HepG2 (cell line): ENCODE measurements at regions of chr2 and their contacts with region 1.

Region 1: GRCh38 chr2:200650195-200650594 is 64.4 kb downstream of the AOX1 start:
- DNase-seq: no peak
- ATAC-seq: no peak
- H3K4me3 ChIP-seq: no peak overlapping the region
- H3K27ac ChIP-seq: no peak overlapping the region
- H3K4me1 ChIP-seq: peaks cover 30% of the 10 kb centered on the region
- H3K27me3 ChIP-seq: no peaks in the 10 kb centered on the region
- CTCF ChIP-seq: no peak
- EP300 ChIP-seq: no peak
- POLR2A ChIP-seq: no peak
- RAD21 ChIP-seq: no peak

Region 2: DNA sequence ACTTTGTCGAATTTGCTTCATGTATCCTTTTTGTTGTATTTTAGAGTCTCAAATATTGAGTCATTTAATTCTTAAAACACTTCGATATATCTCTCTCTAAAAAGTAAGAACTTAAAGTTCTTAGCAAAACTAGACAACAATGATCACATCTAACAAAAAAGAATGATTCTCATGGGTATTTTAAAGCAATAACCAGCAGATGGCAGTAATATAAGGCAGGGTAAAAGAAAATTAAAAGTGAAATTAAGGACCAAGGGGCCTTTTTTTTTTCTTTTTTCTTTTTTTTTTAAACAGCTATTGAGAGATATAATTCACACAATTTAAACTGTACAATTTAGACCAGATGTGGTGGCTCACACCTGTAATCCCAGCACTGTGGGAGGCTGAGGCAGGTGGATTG is 74.2 kb before region 1 on chr2:
- CTCF ChIA-PET with region 1: no interaction called
- POLR2A ChIA-PET with region 1: no interaction called
- in situ Hi-C with region 1: no loop called
- intact Hi-C with region 1: no loop called
- DNase-seq: no peak
- ATAC-seq: no peak
- H3K4me3 ChIP-seq: no peak overlapping the region
- H3K27ac ChIP-seq: no peak overlapping the region
- H3K4me1 ChIP-seq: peaks cover 8% of the 10 kb centered on the region
- H3K27me3 ChIP-seq: no peaks in the 10 kb centered on the region
- CTCF ChIP-seq: peak; percentile 17; the same call in 1 of the 2 replicates
- EP300 ChIP-seq: no peak
- POLR2A ChIP-seq: no peak
- RAD21 ChIP-seq: no peak

Region 3: DNA sequence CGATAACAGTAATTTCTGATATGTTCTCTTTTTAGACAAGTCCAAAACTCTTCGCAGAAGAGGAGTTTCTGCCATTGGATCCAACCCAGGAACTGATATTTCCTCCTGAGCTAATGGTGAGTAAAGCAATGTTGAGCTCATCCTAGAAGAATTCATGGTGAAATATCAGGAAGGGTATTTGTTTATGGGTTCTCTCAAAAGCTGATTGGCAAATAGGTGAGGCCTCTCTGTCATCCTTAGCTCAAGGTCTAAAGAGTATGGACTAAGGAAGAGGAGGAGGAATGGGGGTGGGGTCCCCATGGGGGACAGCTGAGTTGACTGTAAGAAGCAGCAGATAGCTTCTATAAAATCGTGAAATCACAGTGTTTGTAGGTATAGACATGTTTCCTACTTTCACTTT is 46.2 kb before region 1 on chr2:
- CTCF ChIA-PET with region 1: no interaction called
- POLR2A ChIA-PET with region 1: interaction called, 32 read pairs
- in situ Hi-C with region 1: no loop called
- intact Hi-C with region 1: no loop called
- DNase-seq: peak; percentile 90
- ATAC-seq: peak; percentile 95
- H3K4me3 ChIP-seq: no peak overlapping the region
- H3K27ac ChIP-seq: peak overlapping the region; percentile 53
- H3K4me1 ChIP-seq: peaks cover 21% of the 10 kb centered on the region
- H3K27me3 ChIP-seq: no peaks in the 10 kb centered on the region
- CTCF ChIP-seq: no peak
- EP300 ChIP-seq: peak; percentile 50 to 68; a peak in 3 of 4 replicates
- POLR2A ChIP-seq: no peak
- RAD21 ChIP-seq: no peak

Region 4: DNA sequence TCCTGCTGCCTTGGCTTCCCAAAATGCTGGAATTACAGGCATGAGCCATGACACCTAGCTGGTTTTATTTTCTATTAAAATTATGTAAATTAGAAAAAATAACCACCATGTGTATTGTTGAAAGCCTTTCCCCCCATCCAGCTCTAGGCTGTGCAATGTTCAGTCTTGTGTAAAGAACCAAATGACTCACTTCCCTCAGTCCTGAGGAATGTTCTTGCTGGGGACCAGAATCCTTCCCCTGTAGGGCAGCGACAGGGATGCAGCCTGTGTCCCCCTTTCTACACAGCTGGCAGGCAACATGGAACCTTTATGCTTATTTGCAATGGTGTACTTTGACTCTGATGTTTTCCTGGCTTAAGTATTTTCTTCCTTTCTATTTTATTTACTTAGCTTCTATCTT is 34.9 kb before region 1 on chr2:
- CTCF ChIA-PET with region 1: no interaction called
- POLR2A ChIA-PET with region 1: interaction called, 10 read pairs
- in situ Hi-C with region 1: no loop called
- intact Hi-C with region 1: no loop called
- DNase-seq: peak; percentile 68
- ATAC-seq: peak; percentile 98
- H3K4me3 ChIP-seq: no peak overlapping the region
- H3K27ac ChIP-seq: no peak overlapping the region
- H3K4me1 ChIP-seq: peaks cover 22% of the 10 kb centered on the region
- H3K27me3 ChIP-seq: no peaks in the 10 kb centered on the region
- CTCF ChIP-seq: no peak
- EP300 ChIP-seq: no peak; a peak in 1 of 4 replicates
- POLR2A ChIP-seq: no peak
- RAD21 ChIP-seq: no peak

Region 5: DNA sequence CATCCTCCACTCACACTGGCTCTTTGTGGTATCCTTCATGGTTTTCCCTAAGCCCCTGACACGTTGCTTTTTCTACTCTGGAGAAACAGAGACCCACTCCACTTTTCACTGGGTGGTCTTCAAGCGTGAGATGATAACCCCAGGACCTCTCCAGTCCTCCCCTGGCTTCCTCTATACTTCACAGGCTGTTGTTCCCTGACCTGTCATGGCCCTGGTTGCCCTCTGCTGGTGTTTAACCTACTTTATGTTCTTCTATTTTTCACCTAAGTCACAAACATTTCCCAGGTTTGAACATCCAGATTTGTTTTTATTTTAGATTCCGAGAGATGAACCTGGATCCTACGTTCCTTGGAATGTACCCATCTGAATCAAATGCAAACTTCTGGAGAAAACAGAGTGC is 20.1 kb after region 1 on chr2:
- CTCF ChIA-PET with region 1: no interaction called
- POLR2A ChIA-PET with region 1: interaction called, 11 read pairs
- in situ Hi-C with region 1: no loop called
- intact Hi-C with region 1: no loop called
- DNase-seq: no peak
- ATAC-seq: peak; percentile 78
- H3K4me3 ChIP-seq: no peak overlapping the region
- H3K27ac ChIP-seq: no peak overlapping the region
- H3K4me1 ChIP-seq: peaks cover 17% of the 10 kb centered on the region
- H3K27me3 ChIP-seq: no peaks in the 10 kb centered on the region
- CTCF ChIP-seq: peak; percentile 45
- EP300 ChIP-seq: no peak
- POLR2A ChIP-seq: no peak
- RAD21 ChIP-seq: 0 out of 2 replicates have a peak, but pooled peaks have one; percentile 38

Region 6: GRCh38 chr2:200966770-200967169 is 316.6 kb after region 1 on chr2:
- CTCF ChIA-PET with region 1: no interaction called
- POLR2A ChIA-PET with region 1: no interaction called
- in situ Hi-C with region 1: no loop called
- intact Hi-C with region 1: no loop called
- DNase-seq: no peak
- ATAC-seq: no peak
- H3K4me3 ChIP-seq: no peak overlapping the region
- H3K27ac ChIP-seq: no peak overlapping the region
- H3K4me1 ChIP-seq: peaks cover 35% of the 10 kb centered on the region
- H3K27me3 ChIP-seq: no peaks in the 10 kb centered on the region; a peak in 1 of 5 replicates
- CTCF ChIP-seq: no peak
- EP300 ChIP-seq: no peak
- POLR2A ChIP-seq: no peak
- RAD21 ChIP-seq: no peak